Activated CD4-positive, alpha-beta T cell treated with anti-CD3 and anti-CD28 coated beads for 36 hours (primary cell): ENCODE measurements at regions of chrX and their contacts with region 1.

Region 1: DNA sequence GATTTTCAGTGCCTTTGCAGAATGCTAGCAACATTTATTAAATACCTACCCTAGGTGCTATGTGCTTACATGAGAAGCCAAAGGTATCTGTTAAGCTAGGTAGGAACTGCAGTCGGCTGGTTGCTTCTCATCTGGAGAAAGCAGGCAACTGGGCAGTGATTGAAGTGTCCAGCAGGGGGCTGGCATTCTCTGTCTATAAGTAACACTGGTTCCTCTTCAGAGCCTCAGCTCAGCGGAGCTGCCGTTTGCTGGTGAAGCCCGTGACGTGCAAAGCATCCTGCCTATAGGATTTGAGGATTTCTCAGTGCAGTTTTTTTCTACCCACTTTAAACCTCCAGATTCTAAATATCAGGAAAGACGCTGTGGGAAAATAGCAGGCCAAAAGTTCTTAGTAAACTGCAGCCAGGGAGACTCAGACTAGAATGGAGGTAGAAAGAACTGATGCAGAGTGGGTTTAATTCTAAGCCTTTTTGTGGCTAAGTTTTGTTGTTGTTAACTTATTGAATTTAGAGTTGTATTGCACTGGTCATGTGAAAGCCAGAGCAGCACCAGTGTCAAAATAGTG is at the start of gene GRPR:
- DNase-seq: peak; percentile 75
- ATAC-seq: peak; percentile 77
- H3K4me3 Mint-ChIP-seq: no peak within 1 kb of the TSS
- H3K27ac Mint-ChIP-seq: no peak within 1 kb of the TSS
- H3K4me1 Mint-ChIP-seq: peaks cover 22% of the 10 kb centered on the region
- H3K27me3 Mint-ChIP-seq: peaks cover 12% of the 10 kb centered on the region
- total RNA-seq, gene GRPR: not detected

Region 2: DNA sequence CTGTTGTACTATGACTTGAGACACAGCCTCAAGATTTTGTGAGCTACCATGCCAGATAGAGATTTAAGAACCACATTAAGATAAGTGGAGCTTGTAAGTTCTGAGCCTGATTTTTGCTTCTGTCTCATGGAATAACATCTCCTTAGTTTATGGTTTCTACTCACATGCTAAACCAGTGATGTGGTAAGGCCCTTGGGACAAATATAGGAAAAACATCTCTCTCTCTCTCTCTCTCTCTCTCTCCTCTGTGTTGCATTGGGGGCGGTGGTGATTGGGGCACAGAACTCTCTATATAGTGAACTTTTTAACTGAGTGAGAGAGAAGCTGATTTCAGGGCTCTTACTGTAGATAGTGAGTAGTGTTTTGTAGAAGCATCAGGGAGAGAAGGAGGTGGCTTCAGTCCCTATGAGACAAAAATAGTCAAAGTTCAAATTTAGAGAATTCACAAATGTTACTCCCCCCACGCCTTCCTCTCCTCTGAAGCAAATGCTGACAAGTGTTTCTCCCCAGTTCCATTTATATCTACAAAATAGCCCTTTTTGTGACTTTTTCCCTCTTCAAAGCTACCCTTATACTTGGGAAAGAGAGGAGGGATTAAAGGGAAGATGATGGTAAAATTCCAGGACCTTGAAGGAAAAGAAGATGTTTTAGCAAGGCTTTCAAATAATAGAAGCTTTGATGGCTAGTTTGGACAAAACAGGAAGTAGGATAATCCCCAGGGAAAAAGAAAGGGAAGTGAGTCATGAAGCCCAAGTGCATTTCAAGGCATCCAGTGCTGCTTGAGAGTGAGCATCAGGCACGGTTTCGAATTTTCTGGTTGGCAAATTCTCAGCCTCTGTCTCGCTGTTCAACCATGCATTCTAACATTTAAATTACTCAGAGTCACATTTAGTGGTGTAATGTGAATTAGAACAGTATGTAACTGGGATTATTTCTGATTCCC is 134.4 kb before region 1 on chrX:
- CTCF ChIA-PET with region 1: no interaction called
- POLR2A ChIA-PET with region 1: no interaction called
- intact Hi-C with region 1: loop called in 1 of 2 experiments (anchors 5 kb)
- DNase-seq: no peak
- ATAC-seq: no peak
- H3K4me3 Mint-ChIP-seq: no peak overlapping the region
- H3K27ac Mint-ChIP-seq: no peak overlapping the region
- H3K4me1 Mint-ChIP-seq: peaks cover 6% of the 10 kb centered on the region
- H3K27me3 Mint-ChIP-seq: peaks cover 10% of the 10 kb centered on the region